AG04450 (cell line): ENCODE measurements at regions of chr22 and their contacts with region 1.

Region 1: DNA sequence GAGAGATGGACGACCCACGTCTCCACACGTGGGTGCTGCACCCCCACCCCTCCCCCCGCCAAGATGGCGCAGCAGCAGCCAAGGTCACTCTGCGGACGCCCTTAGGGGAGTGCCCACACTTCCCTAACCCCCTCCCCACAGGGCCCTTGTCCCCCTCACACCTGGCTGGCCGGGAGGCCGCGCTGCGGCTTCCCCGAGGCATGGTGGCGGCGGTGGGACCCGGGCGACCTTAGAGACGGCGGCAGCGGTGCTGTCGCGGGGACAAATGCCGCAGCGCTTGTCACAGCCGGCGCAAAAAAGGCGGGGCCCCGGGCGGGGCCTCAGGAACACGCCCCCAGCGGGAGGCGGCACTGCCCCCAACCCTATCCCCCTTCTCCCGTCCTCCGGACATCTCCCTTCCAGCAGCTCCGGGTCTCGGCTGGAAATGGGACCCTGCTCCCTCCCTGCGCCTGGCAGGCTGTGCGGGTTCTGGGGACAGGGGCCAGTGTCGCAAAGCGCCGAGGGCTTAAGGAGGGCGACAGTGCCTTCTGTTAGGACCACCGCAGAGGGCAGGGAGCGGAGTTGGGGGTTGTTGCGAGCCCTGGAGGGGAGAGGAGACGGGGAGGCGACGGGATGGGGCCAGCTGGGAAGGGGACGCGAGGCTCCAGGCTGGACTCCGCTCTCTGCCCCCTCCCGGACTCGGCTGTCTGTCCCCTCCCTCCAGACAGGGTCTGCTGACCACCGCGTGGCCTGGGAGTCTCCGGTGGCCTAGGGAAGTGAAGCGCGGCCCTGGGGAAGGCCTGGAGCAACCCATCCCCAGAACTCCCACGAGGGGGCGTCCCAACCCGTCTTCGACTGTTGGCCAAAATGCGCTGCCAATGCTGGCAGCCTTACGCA is at the start of gene CHCHD10:
- DNase-seq: no peak
- H3K4me3 ChIP-seq: peak within 1 kb of the TSS; percentile 59
- H3K27ac ChIP-seq: no peak within 1 kb of the TSS
- H3K27me3 ChIP-seq: no peaks in the 10 kb centered on the region
- CTCF ChIP-seq: peak; percentile 79
- polyA plus RNA-seq, gene CHCHD10: 10.1 and 16.9 TPM in 2 replicates

Region 2: GRCh38 chr22:23781511-23782315 is 13.8 kb after region 1 on chr22:
- CTCF ChIA-PET with region 1: interaction called, 14 read pairs
- POLR2A ChIA-PET with region 1: interaction called, 3 read pairs
- DNase-seq: no peak
- H3K4me3 ChIP-seq: no peak overlapping the region
- H3K27ac ChIP-seq: no peak overlapping the region
- H3K27me3 ChIP-seq: no peaks in the 10 kb centered on the region
- CTCF ChIP-seq: no peak

Region 3: DNA sequence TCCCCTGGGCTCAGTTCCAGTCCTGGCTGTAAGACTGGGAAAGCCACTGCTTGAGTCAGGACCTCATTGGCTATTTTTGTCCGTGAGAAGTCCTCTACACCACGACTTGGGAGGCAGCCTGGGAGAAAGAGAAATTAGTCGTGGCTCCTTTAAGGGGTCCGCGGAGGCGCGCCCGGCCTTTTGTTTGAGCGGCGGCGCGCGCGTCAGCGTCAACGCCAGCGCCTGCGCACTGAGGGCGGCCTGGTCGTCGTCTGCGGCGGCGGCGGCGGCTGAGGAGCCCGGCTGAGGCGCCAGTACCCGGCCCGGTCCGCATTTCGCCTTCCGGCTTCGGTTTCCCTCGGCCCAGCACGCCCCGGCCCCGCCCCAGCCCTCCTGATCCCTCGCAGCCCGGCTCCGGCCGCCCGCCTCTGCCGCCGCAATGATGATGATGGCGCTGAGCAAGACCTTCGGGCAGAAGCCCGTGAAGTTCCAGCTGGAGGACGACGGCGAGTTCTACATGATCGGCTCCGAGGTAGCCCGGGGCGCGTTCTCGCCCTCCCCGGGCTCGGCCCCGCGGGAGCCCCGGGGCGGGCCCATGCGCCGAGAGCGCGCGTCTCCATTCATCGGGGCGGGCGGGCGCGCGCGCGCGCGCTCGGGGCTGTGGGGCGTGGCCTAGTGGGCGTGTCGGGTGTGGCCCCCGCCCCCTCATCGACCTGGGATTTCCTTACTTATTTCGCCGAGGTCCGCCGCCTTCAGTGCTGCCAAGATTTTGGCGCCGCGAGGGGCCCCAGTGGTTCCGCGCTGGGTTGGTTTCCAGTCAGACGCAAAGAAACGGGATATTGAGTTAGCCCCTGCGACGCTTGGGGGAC is 19.1 kb after region 1 on chr22 and contains the start of gene SMARCB1:
- CTCF ChIA-PET with region 1: interaction called, 14 read pairs
- POLR2A ChIA-PET with region 1: interaction called, 3 read pairs
- DNase-seq: peak; percentile 67
- H3K4me3 ChIP-seq: peak within 1 kb of the TSS; percentile 88
- H3K27ac ChIP-seq: peak within 1 kb of the TSS; percentile 94
- H3K27me3 ChIP-seq: no peaks in the 10 kb centered on the region
- CTCF ChIP-seq: no peak
- polyA plus RNA-seq, gene SMARCB1: 155 and 180 TPM in 2 replicates

Region 4: GRCh38 chr22:24106385-24107381 is 338.8 kb after region 1 on chr22:
- CTCF ChIA-PET with region 1: no interaction called
- POLR2A ChIA-PET with region 1: no interaction called
- DNase-seq: no peak
- H3K4me3 ChIP-seq: no peak overlapping the region
- H3K27ac ChIP-seq: peak overlapping the region; percentile 39
- H3K27me3 ChIP-seq: no peaks in the 10 kb centered on the region
- CTCF ChIP-seq: peak; percentile 27